Activated CD4-positive, alpha-beta T cell treated with anti-CD3 and anti-CD28 coated beads for 36 hours (primary cell): ENCODE measurements at regions of chr9 and their contacts with region 1.

Region 1: DNA sequence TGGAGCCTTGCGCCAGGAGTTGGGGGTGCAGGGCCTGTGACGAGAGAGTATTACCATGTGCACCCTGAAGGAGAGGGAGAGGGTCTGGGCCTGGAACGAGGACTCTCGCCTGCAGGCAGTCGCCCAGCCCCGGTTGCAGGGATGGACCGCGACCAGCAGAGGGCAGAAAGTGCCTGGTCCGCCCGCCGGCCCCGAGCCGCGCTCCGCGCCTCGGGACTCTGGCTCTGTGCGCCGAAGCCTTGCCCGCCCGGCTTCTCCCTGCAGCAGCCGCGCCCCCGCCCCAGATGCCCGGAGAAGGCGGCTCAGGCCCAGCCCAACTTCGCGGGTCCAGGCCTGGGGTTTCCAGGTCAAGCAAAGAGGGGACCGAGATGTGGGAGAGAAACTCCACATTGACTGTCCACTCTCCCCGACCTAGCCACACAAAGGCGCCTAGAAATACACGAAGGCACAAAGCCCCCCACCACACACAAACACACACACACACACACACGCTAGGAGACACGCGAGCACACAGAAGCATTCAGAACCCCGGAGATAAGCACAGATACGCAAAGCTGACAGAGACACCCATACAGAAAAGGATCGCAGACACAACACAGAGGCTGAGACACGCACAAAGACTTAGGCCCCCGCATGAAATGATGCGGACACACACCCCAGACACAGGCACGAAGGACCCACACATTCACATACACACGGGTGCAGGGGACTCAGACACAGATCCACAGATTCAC is 2.0 kb upstream of the LMX1B start:
- DNase-seq: peak; percentile 88
- ATAC-seq: peak; percentile 86
- H3K4me3 Mint-ChIP-seq: no peak overlapping the region
- H3K27ac Mint-ChIP-seq: no peak overlapping the region
- H3K4me1 Mint-ChIP-seq: peaks cover 16% of the 10 kb centered on the region
- H3K27me3 Mint-ChIP-seq: peaks cover 63% of the 10 kb centered on the region

Region 2: DNA sequence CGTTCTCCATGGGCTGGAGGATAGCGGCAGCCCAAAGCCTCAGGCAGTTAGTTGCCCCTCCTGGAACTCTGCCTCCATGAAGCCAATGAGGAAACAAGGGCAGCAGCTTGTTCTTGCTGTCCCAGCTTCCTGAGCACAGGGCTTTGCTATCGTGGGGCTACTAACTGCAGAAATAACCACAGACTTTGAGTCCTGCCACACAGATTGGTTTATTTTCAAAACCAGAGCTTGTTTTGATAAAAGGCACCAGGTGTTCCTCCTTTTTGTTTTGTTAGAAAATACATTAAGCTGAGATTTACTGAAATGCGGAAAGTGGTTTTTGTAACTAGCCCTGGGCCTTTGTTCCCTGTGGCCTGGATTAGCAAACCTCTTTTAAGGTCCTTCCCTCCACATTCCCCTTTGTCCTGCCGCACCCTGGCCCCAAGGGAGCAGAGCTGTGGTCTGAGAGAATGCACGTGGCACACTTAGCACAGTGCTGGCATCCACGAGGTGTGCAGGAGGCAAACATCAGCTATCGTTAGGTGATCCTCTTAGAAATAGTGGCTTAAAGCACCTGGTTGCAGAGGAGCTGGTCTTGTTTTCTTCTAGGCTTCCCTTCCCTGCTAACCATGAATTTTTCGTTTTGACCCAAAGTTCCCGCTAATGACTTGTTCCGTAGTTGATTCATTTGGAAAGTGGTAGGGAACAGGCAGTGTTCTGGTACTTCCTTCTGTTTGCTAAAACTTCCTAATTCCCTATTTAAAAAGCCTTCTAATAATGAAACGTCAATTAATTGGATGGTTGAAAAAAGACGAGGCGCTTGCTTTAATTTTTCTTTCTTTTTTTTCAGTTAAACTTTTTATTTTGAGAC is 263.6 kb before region 1 on chr9:
- CTCF ChIA-PET with region 1: no interaction called
- POLR2A ChIA-PET with region 1: no interaction called
- intact Hi-C with region 1: no loop called
- DNase-seq: no peak
- ATAC-seq: no peak
- H3K4me3 Mint-ChIP-seq: no peak overlapping the region
- H3K27ac Mint-ChIP-seq: no peak overlapping the region
- H3K4me1 Mint-ChIP-seq: peaks cover 2% of the 10 kb centered on the region
- H3K27me3 Mint-ChIP-seq: no peaks in the 10 kb centered on the region

Region 3: GRCh38 chr9:126528111-126528510 is 83.6 kb before region 1 on chr9:
- CTCF ChIA-PET with region 1: no interaction called
- POLR2A ChIA-PET with region 1: no interaction called
- intact Hi-C with region 1: no loop called
- DNase-seq: no peak
- ATAC-seq: no peak
- H3K4me3 Mint-ChIP-seq: no peak overlapping the region
- H3K27ac Mint-ChIP-seq: no peak overlapping the region
- H3K4me1 Mint-ChIP-seq: peaks cover 14% of the 10 kb centered on the region
- H3K27me3 Mint-ChIP-seq: peaks cover 12% of the 10 kb centered on the region

Region 4: GRCh38 chr9:126569036-126569435 is 42.7 kb before region 1 on chr9:
- CTCF ChIA-PET with region 1: no interaction called
- POLR2A ChIA-PET with region 1: no interaction called
- intact Hi-C with region 1: no loop called
- DNase-seq: no peak
- ATAC-seq: no peak
- H3K4me3 Mint-ChIP-seq: no peak overlapping the region
- H3K27ac Mint-ChIP-seq: no peak overlapping the region
- H3K4me1 Mint-ChIP-seq: no peaks in the 10 kb centered on the region
- H3K27me3 Mint-ChIP-seq: peaks cover 22% of the 10 kb centered on the region

Region 5: DNA sequence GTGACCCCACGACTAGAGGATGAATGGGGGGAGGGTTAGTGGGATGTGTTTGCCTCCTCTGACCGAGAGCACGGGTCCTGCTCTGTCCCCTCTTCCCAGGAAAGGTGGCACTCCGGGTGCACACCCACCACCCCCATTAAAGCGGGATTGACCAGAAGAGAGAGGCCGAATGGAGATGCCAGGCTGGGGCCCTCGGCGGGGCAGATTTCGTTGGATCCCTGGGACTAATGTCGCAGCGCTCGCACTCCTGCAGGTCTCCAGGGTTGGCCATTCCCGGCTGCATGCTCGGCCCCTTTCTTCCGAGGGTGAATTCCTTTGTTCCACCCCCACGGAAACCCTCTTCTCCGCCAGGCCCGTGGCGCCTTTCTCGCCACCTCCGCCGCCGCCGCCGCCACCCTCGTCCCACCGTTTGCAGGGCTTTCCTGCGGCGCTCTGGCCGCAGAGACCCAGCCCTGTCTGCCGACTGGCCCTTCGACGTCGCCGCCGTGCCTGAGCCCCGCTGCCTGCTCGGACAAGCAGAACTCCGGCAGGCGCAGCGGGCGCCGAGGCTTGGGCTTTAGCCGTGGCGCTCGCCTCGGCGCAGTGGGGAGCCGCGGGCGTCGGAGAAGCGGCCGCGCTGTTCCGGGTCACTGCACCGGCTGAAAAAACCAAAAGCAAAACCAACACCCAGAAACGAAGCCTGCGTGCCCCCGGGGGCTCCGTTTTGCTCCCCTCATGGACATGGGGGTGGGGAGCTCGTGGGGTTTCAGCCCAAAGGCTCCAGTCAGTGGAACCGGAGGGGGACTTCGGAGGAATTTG is 13.8 kb after region 1 on chr9:
- CTCF ChIA-PET with region 1: interaction called, 5 read pairs
- POLR2A ChIA-PET with region 1: no interaction called
- intact Hi-C with region 1: loop called (anchors 2 kb)
- DNase-seq: peak; percentile 17
- ATAC-seq: peak; percentile 44
- H3K4me3 Mint-ChIP-seq: peak overlapping the region; percentile 41
- H3K27ac Mint-ChIP-seq: no peak overlapping the region
- H3K4me1 Mint-ChIP-seq: peaks cover 11% of the 10 kb centered on the region
- H3K27me3 Mint-ChIP-seq: peaks cover 76% of the 10 kb centered on the region

Region 6: GRCh38 chr9:126676685-126677143 is 65.0 kb after region 1 on chr9:
- CTCF ChIA-PET with region 1: interaction called, 5 read pairs
- POLR2A ChIA-PET with region 1: no interaction called
- intact Hi-C with region 1: loop called (anchors 2 kb)
- DNase-seq: peak; percentile 30
- ATAC-seq: no peak
- H3K4me3 Mint-ChIP-seq: no peak overlapping the region
- H3K27ac Mint-ChIP-seq: no peak overlapping the region
- H3K4me1 Mint-ChIP-seq: peaks cover 12% of the 10 kb centered on the region
- H3K27me3 Mint-ChIP-seq: peaks cover 63% of the 10 kb centered on the region

Region 7: GRCh38 chr9:126690431-126691350 is 78.9 kb after region 1 on chr9:
- CTCF ChIA-PET with region 1: interaction called, 9 read pairs
- POLR2A ChIA-PET with region 1: no interaction called
- intact Hi-C with region 1: loop called (anchors 1 kb)
- DNase-seq: peak; percentile 79
- ATAC-seq: peak; percentile 79
- H3K4me3 Mint-ChIP-seq: no peak overlapping the region
- H3K27ac Mint-ChIP-seq: no peak overlapping the region
- H3K4me1 Mint-ChIP-seq: no peaks in the 10 kb centered on the region
- H3K27me3 Mint-ChIP-seq: peaks cover 28% of the 10 kb centered on the region

Region 8: DNA sequence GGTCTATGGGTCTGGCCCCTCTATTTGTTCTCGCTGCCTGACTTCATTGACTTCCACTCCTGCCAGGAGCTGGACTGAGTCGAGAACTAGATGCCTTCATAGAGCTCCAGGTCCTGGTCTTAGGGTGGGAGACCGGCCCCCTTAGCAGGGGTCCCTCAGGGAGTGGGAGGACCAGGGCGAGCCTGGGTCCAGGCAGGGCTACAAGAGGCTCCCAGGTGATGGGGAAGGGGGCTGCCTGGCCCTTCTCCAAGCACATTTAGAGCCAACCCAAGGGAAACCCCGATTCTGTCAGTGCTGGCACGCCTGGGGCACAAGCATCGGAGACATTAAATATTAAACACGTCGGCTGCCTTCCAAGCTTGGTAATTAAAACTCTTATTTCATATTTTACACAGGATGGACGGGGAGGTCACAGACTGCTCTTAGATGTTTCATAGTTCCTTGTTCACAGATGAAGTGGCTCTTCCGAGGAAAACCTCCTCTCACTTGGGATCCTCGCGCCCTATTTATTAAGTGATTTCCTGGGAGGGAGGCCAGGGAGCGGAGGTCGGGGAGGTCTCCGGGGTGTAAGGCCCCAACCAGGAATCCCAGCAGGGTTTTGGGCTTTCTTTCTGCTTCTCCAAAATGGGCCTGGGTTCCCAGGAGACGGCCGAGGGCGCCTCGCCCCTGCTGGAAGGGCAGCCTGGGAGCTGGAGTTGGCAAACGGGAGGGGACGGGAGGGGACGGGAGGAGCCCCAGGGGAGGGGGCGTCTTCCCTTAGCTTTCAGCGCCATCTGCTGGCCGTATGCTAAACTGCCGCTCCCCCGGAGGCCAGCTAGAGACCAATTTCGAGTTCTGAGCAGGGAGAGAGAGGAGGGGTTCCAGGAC is 169.7 kb after region 1 on chr9:
- CTCF ChIA-PET with region 1: no interaction called
- POLR2A ChIA-PET with region 1: no interaction called
- intact Hi-C with region 1: loop called (anchors 1 to 5 kb)
- DNase-seq: peak; percentile 90
- ATAC-seq: peak; percentile 94
- H3K4me3 Mint-ChIP-seq: no peak overlapping the region
- H3K27ac Mint-ChIP-seq: no peak overlapping the region
- H3K4me1 Mint-ChIP-seq: no peaks in the 10 kb centered on the region
- H3K27me3 Mint-ChIP-seq: peaks cover 9% of the 10 kb centered on the region